ENCODE measurements at regions of chr2 and their contacts with region 1.

Region 1: GRCh38 chr2:219294356-219295351 is 14.5 kb downstream of the PTPRN start:
- DNase-seq: peak; percentile 87 to 91
- ATAC-seq: peak; percentile 69 to 89
- H3K4me3 ChIP-seq: peak overlapping the region; percentile 48
- H3K27ac ChIP-seq: peak overlapping the region; percentile 94 to 99
- H3K4me1 ChIP-seq: peaks cover 23% of the 10 kb centered on the region
- CTCF ChIP-seq: peak; percentile 100
- EP300 ChIP-seq: 0 out of 5 replicates have a peak, but pooled peaks of 1 of the 2 experiments have one; percentile 10
- POLR2A ChIP-seq: peak; percentile 56
- RAD21 ChIP-seq: peak; percentile 74 to 93

Region 2: DNA sequence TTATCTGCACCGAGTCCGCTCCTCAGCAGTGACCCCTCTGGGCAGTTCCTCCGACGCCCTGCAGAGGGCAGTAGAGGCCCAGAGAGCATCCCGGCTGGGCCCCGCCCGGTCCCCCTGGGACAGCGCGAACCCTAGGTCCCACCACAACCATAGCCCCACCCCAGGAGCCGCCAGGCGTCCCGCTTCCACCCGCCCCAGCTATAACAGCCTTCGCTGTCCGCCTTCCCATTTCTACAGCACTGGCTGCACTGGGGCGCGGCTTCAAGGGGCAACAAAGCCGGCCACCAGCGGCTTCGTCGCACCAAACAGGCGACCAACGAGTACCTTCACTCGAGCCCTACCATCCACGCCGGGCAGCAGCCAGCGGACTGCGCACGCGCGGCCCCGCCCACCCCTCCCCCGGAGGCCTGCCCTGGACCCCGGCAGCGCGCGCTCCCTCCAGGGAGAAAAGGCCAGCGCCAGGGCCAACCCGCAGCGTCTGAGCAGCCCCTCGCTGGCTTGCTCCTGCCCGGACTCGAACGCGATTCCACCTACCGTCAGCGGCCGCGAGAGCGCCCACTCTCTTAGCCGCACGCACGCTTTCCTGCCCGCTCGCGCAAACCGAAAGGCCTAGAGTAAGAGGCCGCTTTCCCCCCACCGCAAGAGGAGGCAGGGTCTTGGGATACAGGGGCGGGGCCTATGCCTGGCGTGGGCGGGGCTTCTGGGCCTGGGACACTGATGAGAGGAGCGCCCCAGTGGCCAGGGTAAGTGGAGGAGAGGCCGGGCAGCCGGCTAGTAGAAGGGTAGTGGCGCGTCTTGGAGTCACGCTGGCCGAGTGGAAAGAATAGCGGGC is 134.3 kb before region 1 on chr2 and contains the start of gene NHEJ1:
- CTCF ChIA-PET with region 1: interaction called, 95 read pairs
- POLR2A ChIA-PET with region 1: no interaction called
- DNase-seq: peak; percentile 94 to 95
- ATAC-seq: peak; percentile 94 to 96
- H3K4me3 ChIP-seq: peak within 1 kb of the TSS; percentile 54
- H3K27ac ChIP-seq: peak within 1 kb of the TSS; percentile 91 to 95
- H3K4me1 ChIP-seq: peaks cover 9% of the 10 kb centered on the region
- CTCF ChIP-seq: peak; percentile 95
- EP300 ChIP-seq: no peak
- POLR2A ChIP-seq: peak; percentile 80
- RAD21 ChIP-seq: peak; percentile 85 to 91
- polyA plus RNA-seq, gene NHEJ1: 31.8 and 34.7 TPM in 2 replicates

Region 3: DNA sequence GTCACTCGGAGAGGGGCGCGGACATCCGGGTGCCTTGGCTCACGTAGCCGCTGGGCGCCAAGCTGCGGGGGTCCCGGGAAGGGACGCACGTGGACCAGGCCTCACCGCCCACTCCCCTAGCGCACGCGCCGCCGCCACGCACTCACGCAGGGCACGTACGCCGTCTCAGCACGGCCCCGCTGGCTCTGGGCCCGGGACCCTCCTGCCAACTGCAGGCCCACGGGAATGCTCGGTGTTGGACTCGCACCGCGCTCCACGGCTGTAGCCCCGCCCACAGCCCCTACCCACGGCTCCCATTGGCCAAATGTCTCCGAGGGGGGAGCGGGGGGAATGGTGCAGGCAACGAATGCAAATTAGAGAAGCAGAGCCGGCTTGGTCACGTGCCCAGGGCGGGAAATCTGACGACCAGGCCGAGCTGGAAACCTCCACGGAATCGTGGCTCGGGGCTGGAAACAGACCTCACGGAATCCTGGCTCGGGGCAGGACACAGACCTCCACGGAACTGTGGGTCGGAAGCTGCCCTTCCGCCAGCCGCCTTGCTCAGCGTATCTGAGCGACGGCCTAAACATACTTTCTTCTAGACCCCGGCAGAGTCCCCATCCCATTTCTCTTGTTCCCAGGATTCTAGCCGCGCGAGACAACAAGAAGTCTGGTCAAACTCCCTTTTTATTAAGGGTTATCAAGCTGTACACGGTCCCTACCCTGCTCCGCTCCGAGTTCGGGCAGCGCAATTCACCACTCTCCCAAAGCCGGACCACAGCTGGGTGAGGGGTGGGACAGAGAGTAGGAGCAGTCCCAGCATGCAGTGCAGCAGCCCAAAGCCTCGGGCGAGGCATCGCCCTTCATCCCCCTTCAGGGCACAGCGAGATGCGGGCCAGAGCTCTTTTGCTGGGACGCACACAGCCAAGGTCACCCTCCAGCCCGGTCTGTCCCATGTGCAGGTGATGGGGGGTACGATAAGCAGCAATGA is 75.6 kb before region 1 on chr2 and contains the start of gene ABCB6:
- CTCF ChIA-PET with region 1: interaction called, 79 read pairs
- POLR2A ChIA-PET with region 1: interaction called, 5 read pairs
- DNase-seq: peak; percentile 92
- ATAC-seq: peak; percentile 65 to 84
- H3K4me3 ChIP-seq: peak within 1 kb of the TSS; percentile 65
- H3K27ac ChIP-seq: peak within 1 kb of the TSS; percentile 92 to 95
- H3K4me1 ChIP-seq: peaks cover 30% of the 10 kb centered on the region
- CTCF ChIP-seq: no peak
- EP300 ChIP-seq: no peak
- POLR2A ChIP-seq: peak; percentile 94
- RAD21 ChIP-seq: no peak
- polyA plus RNA-seq, gene ABCB6: 62.5 and 71.0 TPM in 2 replicates

Region 4: DNA sequence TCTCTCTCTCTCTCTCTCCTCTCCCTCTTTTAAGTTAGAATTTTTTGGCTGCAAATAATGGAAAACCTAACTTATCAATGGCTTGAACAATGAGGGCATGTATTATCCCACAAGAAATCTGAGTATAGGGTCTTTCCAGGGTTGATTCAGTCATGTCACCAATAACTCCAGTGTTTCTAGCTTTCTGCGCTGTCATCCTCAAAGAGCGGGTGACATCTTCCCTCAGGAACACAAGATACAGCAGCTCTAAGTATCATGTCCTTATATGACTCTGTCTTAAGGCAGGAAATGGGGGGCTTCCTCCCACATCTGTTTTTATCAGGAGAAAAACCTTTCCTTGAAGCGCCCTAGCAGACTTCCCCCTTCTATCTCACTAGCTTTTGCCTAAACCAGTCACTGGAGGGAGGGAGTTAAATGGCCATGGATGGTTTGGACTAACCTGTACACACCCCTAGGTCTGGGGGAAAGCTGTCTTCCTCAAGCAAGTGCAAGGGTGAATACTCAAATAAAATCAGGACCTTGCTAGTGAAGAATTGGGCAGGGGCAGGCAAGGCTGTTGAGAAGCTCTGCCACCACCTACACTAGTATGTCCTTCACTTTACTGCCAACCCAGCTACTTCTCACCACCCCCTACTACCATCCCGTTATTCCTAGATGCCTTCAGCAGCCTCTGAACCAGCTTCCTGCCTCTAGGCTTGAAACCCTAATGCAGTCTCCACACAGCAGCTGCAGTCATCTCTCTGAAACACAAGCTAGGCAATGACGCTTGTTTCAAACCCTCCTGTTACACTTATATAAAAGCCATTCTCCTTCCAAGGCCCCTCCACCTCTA is 33.4 kb before region 1 on chr2:
- CTCF ChIA-PET with region 1: interaction called, 241 read pairs
- POLR2A ChIA-PET with region 1: no interaction called
- DNase-seq: no peak
- ATAC-seq: peak in 1 of 2 experiments; percentile 56; a peak in 3 of 6 replicates
- H3K4me3 ChIP-seq: no peak overlapping the region
- H3K27ac ChIP-seq: peak overlapping the region in 1 of 2 experiments; percentile 37; a peak in 1 of 6 replicates
- H3K4me1 ChIP-seq: no peaks in the 10 kb centered on the region
- CTCF ChIP-seq: no peak
- EP300 ChIP-seq: no peak
- POLR2A ChIP-seq: no peak
- RAD21 ChIP-seq: no peak

Region 5: DNA sequence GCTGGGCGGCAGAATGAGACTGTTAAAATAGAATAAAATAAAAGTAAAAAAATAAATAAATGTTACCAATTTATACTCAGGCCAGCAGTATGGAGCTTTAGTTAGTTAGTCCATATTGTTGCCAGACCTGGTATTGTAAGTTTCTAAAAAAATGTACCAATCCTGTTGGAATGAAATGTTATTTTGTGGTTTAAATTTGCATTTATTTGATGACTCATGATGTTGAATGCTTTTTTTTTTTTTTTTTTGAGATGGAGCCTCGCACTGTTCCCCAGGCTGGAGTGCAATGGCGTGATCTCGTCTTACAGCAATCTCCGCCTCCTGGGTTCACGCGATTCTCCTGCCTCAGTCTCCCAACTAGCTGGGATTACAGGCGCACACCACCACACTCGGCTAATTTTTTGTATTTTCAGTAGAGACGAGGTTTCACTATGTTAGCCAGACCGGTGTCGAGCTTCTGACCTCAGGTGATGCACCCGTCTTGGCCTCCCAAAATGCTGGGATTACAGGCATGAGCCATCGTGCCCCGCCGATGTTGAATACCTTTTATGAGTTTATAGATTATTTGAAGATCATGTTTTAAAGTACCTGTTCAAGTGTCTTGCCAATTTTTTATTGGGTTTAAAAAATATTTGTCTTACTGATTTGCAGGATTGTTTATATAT is 20.3 kb after region 1 on chr2:
- CTCF ChIA-PET with region 1: interaction called, 20 read pairs
- POLR2A ChIA-PET with region 1: no interaction called
- DNase-seq: no peak
- ATAC-seq: no peak
- H3K4me3 ChIP-seq: no peak overlapping the region
- H3K27ac ChIP-seq: no peak overlapping the region
- H3K4me1 ChIP-seq: no peaks in the 10 kb centered on the region
- CTCF ChIP-seq: no peak
- EP300 ChIP-seq: no peak
- POLR2A ChIP-seq: no peak
- RAD21 ChIP-seq: no peak

Region 6: GRCh38 chr2:219530048-219530963 is 235.7 kb after region 1 on chr2:
- CTCF ChIA-PET with region 1: interaction called, 10 read pairs
- POLR2A ChIA-PET with region 1: no interaction called
- DNase-seq: peak; percentile 81 to 94
- ATAC-seq: peak; percentile 71 to 93
- H3K4me3 ChIP-seq: peak overlapping the region; percentile 33; the same call in 2 of the 3 replicates
- H3K27ac ChIP-seq: peak overlapping the region in 1 of 2 experiments; percentile 57; a peak in 1 of 6 replicates
- H3K4me1 ChIP-seq: peaks cover 4% of the 10 kb centered on the region; the same call in 1 of the 3 replicates
- CTCF ChIP-seq: peak; percentile 94
- EP300 ChIP-seq: no peak
- POLR2A ChIP-seq: no peak
- RAD21 ChIP-seq: peak; percentile 99

Measured in A549 (cell line).